ENCODE measurements at regions of chr3 and their contacts with region 1.

Region 1: GRCh38 chr3:49411968-49412631 is at the starts of genes RHOA and TCTA:
- DNase-seq: peak; percentile 100
- H3K4me3 ChIP-seq: peak within 1 kb of the TSS; percentile 74 to 98 (median 90)
- H3K27ac ChIP-seq: peak within 1 kb of the TSS; percentile 96 to 100 (median 98)
- H3K4me1 ChIP-seq: peaks cover 59 to 76% (median 72%) of the 10 kb centered on the region in 4 donors
- H3K27me3 ChIP-seq: no peaks in the 10 kb centered on the region
- CTCF ChIP-seq: no peak
- EP300 ChIP-seq: no peak
- POLR2A ChIP-seq: peak; percentile 95
- total RNA-seq, gene RHOA: 380 to 521 (median 480) TPM
- total RNA-seq, gene TCTA: 22.0 to 29.8 (median 26.2) TPM

Region 2: GRCh38 chr3:49283997-49284396 is 128.1 kb before region 1 on chr3:
- intact Hi-C with region 1: no loop called
- DNase-seq: no peak
- H3K4me3 ChIP-seq: no peak overlapping the region
- H3K27ac ChIP-seq: no peak overlapping the region
- H3K4me1 ChIP-seq: peaks cover 0 to 10% (median 4%) of the 10 kb centered on the region in 4 donors
- H3K27me3 ChIP-seq: no peaks in the 10 kb centered on the region
- CTCF ChIP-seq: no peak
- EP300 ChIP-seq: no peak
- POLR2A ChIP-seq: no peak

Region 3: GRCh38 chr3:49339945-49340800 is 71.9 kb before region 1 on chr3 and contains the start of gene USP4:
- intact Hi-C with region 1: loop called (anchors 1 kb)
- DNase-seq: peak; percentile 94
- H3K4me3 ChIP-seq: peak within 1 kb of the TSS; percentile 62 to 87 (median 83)
- H3K27ac ChIP-seq: peak within 1 kb of the TSS; percentile 90 to 97 (median 97)
- H3K4me1 ChIP-seq: peaks cover 37 to 54% (median 51%) of the 10 kb centered on the region in 4 donors
- H3K27me3 ChIP-seq: no peaks in the 10 kb centered on the region
- CTCF ChIP-seq: peak; percentile 35 to 62 (median 46)
- EP300 ChIP-seq: no peak
- POLR2A ChIP-seq: peak; percentile 16
- total RNA-seq, gene USP4: 17.9 to 35.7 (median 24.3) TPM

Region 4: DNA sequence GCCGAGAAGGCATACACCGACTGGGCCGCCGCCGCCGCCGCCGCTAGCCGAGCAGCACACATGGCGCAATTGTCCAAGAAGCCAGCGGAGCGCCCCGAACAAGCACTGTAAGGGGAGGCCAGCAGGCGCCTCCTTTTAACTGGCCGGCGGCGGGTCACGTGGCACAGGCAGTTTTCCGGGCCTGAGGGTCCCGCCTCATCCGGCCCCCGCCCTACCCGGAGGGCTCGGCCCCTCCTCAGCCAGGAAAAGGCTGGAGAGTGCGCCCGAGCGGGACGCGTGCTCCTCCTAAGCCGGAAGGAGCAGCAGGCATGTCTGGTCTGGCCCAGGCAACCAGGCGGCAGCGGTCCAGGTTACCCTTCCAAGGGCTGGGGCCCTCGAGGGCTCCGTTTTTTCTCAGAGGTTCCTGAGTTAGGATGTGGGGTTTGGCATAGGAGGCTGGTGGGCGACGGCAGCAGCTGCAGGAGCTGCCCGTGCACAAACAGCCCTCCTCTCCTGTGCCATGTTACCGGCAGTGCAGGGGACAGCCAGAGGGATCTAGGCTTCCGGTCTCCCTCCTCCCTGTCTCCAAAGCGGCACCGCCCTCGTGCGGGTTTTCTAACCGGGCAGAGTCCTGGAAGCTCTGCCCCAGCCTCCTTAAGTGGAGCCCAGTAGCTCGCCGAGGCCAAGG is 53.8 kb before region 1 on chr3 and contains the start of gene GPX1:
- intact Hi-C with region 1: loop called (anchors 5 kb)
- DNase-seq: peak; percentile 99
- H3K4me3 ChIP-seq: peak within 1 kb of the TSS; percentile 78 to 85 (median 80)
- H3K27ac ChIP-seq: peak within 1 kb of the TSS; percentile 88 to 97 (median 94)
- H3K4me1 ChIP-seq: peaks cover 29 to 39% (median 38%) of the 10 kb centered on the region in 4 donors
- H3K27me3 ChIP-seq: no peaks in the 10 kb centered on the region
- CTCF ChIP-seq: no peak
- EP300 ChIP-seq: peak; percentile 10
- POLR2A ChIP-seq: peak; percentile 87
- total RNA-seq, gene GPX1: 154 to 295 (median 226) TPM

Measured in esophagus muscularis mucosa (tissue), 4 donors.